PC-3 (cell line): ENCODE measurements at regions of chr10 and their contacts with region 1.

Region 1: DNA sequence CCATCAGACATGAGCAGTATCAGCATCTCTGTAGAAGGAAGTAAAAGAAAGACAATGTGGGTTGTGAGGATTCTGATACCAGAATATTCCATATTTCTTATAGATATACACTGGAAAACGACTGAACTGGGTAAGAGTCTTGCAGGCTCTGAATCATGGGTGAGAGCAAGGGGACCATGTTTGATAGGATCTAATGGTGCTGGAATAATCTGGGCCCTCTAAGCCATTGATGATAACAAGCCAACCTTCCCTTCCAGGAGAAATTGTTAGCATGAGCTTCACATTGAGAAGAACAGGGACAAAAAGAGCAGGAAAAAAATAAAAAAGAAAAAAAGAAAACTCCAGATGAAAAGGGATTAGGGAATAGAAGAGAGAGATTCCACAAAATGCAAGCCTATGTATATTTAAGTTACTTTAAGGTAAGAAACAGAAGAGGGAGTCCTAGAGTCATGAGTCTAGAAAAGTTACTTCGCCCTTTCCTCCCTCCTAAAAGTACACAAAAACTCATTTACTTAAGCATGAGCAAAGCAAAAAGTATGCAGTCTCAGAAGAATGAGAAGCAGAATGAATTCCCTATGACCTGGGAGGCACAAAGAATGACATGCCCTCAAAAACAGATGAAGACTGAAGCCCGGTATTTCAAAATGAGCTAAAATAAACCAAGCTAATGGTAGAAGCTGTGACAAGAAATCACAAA is 181.9 kb downstream of the TMEM26 start:
- DNase-seq: peak; percentile 100
- ATAC-seq: peak; percentile 100
- H3K4me3 ChIP-seq: peak overlapping the region; percentile 3; the same call in 1 of the 2 replicates
- H3K27ac ChIP-seq: peak overlapping the region; percentile 1; the same call in 1 of the 2 replicates
- H3K4me1 ChIP-seq: peaks cover 14% of the 10 kb centered on the region
- H3K27me3 ChIP-seq: no peaks in the 10 kb centered on the region
- CTCF ChIP-seq: peak; percentile 99

Region 2: GRCh38 chr10:60978287-60979115 is 292.8 kb before region 1 on chr10:
- CTCF ChIA-PET with region 1: no interaction called
- POLR2A ChIA-PET with region 1: no interaction called
- intact Hi-C with region 1: loop called (anchors 5 kb)
- DNase-seq: peak; percentile 99
- ATAC-seq: peak; percentile 64
- H3K4me3 ChIP-seq: no peak overlapping the region
- H3K27ac ChIP-seq: peak overlapping the region; percentile 32
- H3K4me1 ChIP-seq: peaks cover 67% of the 10 kb centered on the region
- H3K27me3 ChIP-seq: no peaks in the 10 kb centered on the region
- CTCF ChIP-seq: no peak

Region 3: DNA sequence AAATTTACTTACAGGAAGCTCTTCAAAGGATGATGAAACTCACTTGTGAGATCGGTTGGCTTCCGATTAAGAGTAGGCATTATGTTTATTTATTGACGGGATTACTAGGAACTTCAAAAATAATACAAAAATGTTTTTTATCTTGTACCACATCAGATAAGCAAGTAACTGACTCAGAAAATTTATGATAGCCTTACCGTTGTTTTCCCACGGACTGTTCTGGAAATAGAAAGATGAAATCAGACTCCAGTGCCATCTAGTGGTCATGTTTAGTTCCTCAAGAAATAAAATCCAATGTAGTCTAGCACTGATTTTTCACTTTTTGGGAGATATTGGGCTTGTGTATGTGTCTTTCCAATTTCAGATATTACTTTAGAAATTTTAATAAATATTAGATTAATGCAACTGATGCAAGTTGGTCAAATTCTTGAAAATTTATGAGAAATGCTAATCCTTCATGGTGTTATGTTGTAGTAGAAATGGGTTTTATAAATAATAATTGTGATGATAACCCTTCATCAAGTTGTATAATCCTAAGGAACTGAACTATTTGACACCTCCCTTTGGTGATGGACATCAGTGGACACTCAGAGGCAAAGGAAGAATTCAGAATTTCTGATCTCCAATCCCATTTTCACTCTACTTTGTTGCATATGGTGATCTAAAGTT is 13.1 kb after region 1 on chr10:
- CTCF ChIA-PET with region 1: interaction called, 7 read pairs
- POLR2A ChIA-PET with region 1: no interaction called
- intact Hi-C with region 1: loop called (anchors 1 kb)
- DNase-seq: peak; percentile 98
- ATAC-seq: peak; percentile 66
- H3K4me3 ChIP-seq: peak overlapping the region; percentile 13
- H3K27ac ChIP-seq: no peak overlapping the region
- H3K4me1 ChIP-seq: peaks cover 13% of the 10 kb centered on the region
- H3K27me3 ChIP-seq: no peaks in the 10 kb centered on the region
- CTCF ChIP-seq: peak; percentile 99

Region 4: DNA sequence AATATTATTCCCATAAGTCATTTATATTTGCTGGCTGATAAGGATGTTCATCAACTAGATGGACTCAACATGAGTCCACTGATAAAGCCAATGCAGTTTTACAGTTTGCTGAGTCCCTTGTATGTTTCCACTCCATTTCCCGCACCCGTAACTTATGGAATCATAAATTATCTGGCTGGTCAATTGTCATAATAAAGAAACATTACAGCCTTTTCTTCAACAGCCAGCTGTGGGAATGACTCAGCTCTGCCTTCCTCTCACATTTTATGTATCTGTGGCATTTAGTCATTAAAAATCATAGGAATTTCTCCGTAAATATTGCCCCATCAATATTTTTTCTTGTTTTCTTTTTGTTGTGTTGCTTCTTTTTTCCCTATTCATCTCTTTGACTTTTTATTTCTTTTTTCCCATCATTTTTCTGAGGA is 204.2 kb after region 1 on chr10:
- CTCF ChIA-PET with region 1: interaction called, 5 read pairs
- POLR2A ChIA-PET with region 1: no interaction called
- intact Hi-C with region 1: loop called (anchors 1 kb)
- DNase-seq: peak; percentile 98
- ATAC-seq: peak; percentile 41
- H3K4me3 ChIP-seq: no peak overlapping the region
- H3K27ac ChIP-seq: no peak overlapping the region
- H3K4me1 ChIP-seq: peaks cover 36% of the 10 kb centered on the region
- H3K27me3 ChIP-seq: no peaks in the 10 kb centered on the region
- CTCF ChIP-seq: no peak

Region 5: GRCh38 chr10:61733358-61733940 is 462.2 kb after region 1 on chr10:
- CTCF ChIA-PET with region 1: interaction called, 3 read pairs
- POLR2A ChIA-PET with region 1: no interaction called
- intact Hi-C with region 1: loop called (anchors 1 kb)
- DNase-seq: peak; percentile 96
- ATAC-seq: peak; percentile 88
- H3K4me3 ChIP-seq: no peak overlapping the region
- H3K27ac ChIP-seq: no peak overlapping the region
- H3K4me1 ChIP-seq: no peaks in the 10 kb centered on the region
- H3K27me3 ChIP-seq: 0 out of 2 replicates have a peak, but pooled peaks cover 7% of the 10 kb centered on the region
- CTCF ChIP-seq: peak; percentile 100

Region 6: GRCh38 chr10:63083904-63084689 is 1812.8 kb after region 1 on chr10:
- CTCF ChIA-PET with region 1: no interaction called
- POLR2A ChIA-PET with region 1: no interaction called
- intact Hi-C with region 1: loop called (anchors 5 kb)
- DNase-seq: peak; percentile 99
- ATAC-seq: peak; percentile 95
- H3K4me3 ChIP-seq: no peak overlapping the region
- H3K27ac ChIP-seq: no peak overlapping the region
- H3K4me1 ChIP-seq: peaks cover 14% of the 10 kb centered on the region
- H3K27me3 ChIP-seq: no peaks in the 10 kb centered on the region
- CTCF ChIP-seq: peak; percentile 100